ENCODE measurements at regions of chr14 and their contacts with region 1.

Region 1: DNA sequence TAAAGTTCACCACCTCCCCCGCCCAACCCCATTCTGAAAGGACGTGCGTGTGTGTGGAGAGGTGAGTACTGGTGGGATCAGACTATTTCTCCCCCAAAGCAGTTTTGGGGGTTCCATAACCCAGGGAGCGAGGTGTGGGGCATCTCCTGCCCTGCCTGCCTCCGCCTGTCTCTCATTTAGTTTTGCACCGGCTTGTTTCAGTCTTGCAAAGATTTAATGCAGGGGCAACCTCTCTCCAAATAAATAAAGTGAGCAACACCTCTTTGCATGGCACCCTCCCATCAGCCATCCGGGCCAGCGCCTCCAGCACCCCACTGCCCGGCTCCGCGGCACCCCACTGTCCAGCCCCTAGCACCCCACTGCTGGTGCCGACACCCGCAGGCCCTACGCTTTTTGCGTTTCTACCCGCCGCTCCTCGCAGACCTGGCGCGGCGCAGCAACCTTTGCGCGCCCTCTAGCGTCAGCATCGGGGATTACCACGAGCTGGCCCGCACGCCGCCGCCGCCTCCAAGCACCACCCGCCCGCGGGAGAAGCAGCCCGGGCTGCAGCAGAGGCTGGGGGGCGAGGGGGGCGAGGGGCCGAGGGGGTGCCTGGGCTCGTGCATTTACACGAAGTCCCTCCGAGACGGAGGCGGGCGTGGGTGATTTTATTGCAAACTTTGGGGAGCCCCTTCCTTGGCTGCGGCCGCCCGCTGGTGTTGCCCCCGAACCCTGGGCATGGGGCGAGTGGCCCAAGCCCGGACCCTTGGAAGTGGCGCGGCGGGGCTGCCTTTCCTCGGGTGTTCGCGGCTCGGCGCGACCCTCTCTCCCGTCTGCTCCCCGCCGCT is 55.8 kb upstream of the VRK1 start:
- DNase-seq: no peak
- ATAC-seq: peak; percentile 97
- H3K4me3 ChIP-seq: peak overlapping the region; percentile 23; the same call in 1 of the 2 replicates
- H3K27ac ChIP-seq: no peak overlapping the region
- H3K4me1 ChIP-seq: no peaks in the 10 kb centered on the region
- H3K27me3 ChIP-seq: peaks cover 7 to 11% of the 10 kb centered on the region in 2 experiments
- CTCF ChIP-seq: peak; percentile 65 to 87 (median 85)
- EP300 ChIP-seq: no peak
- POLR2A ChIP-seq: no peak
- RAD21 ChIP-seq: peak; percentile 80

Region 2: DNA sequence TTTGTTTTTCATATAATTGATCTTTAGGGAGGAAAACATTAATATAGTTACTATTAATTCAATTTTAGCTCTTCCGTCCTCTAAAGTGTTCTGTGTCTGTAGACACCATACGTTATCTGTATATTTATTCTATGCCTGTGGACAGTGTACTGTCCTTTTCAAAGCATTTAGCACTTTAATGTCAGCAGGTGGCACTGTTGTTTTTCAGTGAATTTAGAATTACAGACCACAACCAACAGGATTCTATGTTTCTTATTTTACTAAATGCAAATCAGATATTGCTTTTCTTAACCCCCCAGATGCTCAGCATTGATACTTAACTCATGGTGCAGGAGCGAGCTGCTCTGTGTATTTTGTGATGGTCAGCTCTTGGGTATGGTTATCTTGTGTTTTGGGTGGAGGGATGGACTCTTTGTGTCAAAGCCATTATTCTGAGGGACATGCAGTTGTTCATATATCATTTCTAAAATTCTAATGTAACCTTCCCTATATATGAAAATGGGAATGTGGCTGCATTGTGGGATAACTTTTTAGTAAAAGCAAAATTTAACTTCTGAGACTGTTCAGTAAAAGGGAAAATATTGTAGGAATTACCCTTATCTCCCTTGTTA is 174.0 kb before region 1 on chr14:
- CTCF ChIA-PET with region 1: interaction called, 93 read pairs
- POLR2A ChIA-PET with region 1: no interaction called
- RAD21 ChIA-PET with region 1: interaction called, 41 read pairs
- SMC1A ChIA-PET with region 1: interaction called, 31 read pairs
- in situ Hi-C with region 1: no loop called
- intact Hi-C with region 1: loop called (anchors 1 kb)
- DNase-seq: no peak
- ATAC-seq: peak; percentile 90
- H3K4me3 ChIP-seq: no peak overlapping the region
- H3K27ac ChIP-seq: no peak overlapping the region
- H3K4me1 ChIP-seq: no peaks in the 10 kb centered on the region
- H3K27me3 ChIP-seq: no peaks in the 10 kb centered on the region
- CTCF ChIP-seq: peak; percentile 38 to 50 (median 48); a peak in 5 of 6 replicates
- EP300 ChIP-seq: no peak
- POLR2A ChIP-seq: no peak
- RAD21 ChIP-seq: peak; percentile 55

Region 3: DNA sequence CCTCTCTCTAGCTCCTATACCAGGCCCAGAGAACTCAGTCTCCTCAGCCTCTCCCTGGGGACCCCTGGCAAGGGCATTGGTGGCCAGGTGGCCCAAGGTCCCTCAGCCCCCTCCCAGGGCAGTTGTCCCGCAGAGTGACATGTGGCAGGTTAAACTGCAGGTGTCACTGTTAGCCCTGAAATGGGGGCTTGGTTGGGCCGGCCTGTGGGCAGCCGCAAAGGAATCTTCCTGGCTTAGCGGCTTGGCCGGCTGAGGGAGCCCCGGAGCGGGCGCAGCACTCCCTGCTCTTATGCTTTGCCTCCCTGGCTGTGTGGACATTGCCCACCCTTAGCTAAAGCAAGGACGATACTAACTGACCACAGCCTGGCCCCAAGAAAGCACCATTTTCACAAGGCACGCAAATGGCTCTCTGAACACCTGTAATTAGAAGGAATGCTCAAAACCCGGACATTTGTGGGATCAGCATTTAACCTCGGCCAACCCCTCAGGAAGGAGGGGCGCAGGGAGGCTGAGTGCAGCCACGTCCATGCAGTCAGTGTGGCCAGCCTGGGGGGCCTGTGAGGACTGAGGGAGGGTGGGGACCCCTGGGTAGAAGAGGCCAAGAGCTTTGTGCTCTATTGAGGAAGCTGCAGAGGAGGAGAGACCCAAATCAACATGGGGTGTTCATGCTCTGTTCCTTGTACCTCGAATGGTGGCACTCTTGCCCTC is 157.0 kb before region 1 on chr14:
- CTCF ChIA-PET with region 1: interaction called, 49 read pairs
- POLR2A ChIA-PET with region 1: no interaction called
- RAD21 ChIA-PET with region 1: interaction called, 8 read pairs
- SMC1A ChIA-PET with region 1: interaction called, 10 read pairs
- in situ Hi-C with region 1: loop called (anchors 5 kb)
- intact Hi-C with region 1: loop called (anchors 1 kb)
- DNase-seq: no peak
- ATAC-seq: peak; percentile 92
- H3K4me3 ChIP-seq: no peak overlapping the region
- H3K27ac ChIP-seq: no peak overlapping the region
- H3K4me1 ChIP-seq: no peaks in the 10 kb centered on the region
- H3K27me3 ChIP-seq: peaks cover 0 to 2% of the 10 kb centered on the region in 2 experiments; a peak in 1 of 4 replicates
- CTCF ChIP-seq: peak; percentile 65 to 90 (median 74)
- EP300 ChIP-seq: no peak
- POLR2A ChIP-seq: no peak
- RAD21 ChIP-seq: peak; percentile 67

Region 4: DNA sequence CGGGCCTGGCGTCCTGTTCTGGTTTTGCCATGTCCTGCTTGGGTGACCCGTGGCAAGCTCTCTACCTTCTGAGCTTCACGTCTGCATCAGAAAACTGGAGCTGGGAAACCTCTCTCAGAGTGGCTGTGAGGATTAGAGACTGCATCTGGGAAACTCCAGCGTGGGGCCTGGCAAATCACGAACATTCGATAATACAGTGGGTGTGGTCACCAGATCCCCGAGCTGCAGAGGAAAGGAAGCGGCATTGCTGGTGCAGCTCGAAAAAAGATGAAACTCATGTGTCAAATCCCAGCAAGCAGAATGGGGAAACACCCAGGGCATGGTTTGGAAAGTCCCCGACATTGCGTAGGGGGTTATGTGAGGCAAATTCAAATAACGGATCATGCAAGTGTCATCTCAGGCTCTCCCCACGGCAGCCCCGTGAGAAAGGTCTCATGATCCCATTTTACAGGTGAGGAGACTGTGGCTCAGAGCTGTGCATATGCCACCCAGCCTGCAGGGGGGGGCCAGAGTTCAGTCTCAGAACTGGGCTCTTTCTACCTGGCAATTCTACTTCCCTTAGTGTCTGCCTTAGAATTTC is 42.3 kb before region 1 on chr14:
- CTCF ChIA-PET with region 1: interaction called, 38 read pairs
- POLR2A ChIA-PET with region 1: no interaction called
- RAD21 ChIA-PET with region 1: interaction called, 19 read pairs
- SMC1A ChIA-PET with region 1: interaction called, 8 read pairs
- in situ Hi-C with region 1: no loop called
- intact Hi-C with region 1: no loop called
- DNase-seq: peak; percentile 86
- ATAC-seq: peak; percentile 94
- H3K4me3 ChIP-seq: no peak overlapping the region
- H3K27ac ChIP-seq: peak overlapping the region; percentile 54
- H3K4me1 ChIP-seq: peaks cover 15% of the 10 kb centered on the region
- H3K27me3 ChIP-seq: no peaks in the 10 kb centered on the region
- CTCF ChIP-seq: peak; percentile 46 to 60 (median 51); a peak in 5 of 6 replicates
- EP300 ChIP-seq: peak in 1 of 2 experiments; percentile 54; a peak in 2 of 4 replicates
- POLR2A ChIP-seq: no peak
- RAD21 ChIP-seq: no peak

Region 5: DNA sequence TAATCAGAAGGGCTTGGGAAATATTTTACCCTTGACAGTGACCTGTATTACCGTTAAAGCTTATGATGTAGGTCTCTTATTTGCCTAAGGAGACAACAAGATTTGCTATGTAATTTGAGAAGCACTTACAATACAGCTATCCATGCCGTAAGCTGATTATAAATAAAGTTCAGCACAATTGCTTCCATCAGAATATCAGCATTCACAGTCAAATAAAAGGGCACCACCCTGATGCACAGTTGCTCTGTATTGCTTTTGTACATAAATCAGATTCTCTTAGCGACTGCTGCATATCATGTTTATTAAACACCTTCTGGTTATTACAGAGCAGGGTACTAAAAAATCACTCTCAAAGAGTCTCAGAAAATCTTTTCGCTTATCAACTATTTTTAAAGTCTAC is 11.5 kb before region 1 on chr14:
- CTCF ChIA-PET with region 1: interaction called, 11 read pairs
- POLR2A ChIA-PET with region 1: no interaction called
- RAD21 ChIA-PET with region 1: no interaction called
- SMC1A ChIA-PET with region 1: interaction called, 4 read pairs
- in situ Hi-C with region 1: no loop called
- intact Hi-C with region 1: no loop called
- DNase-seq: no peak
- ATAC-seq: no peak
- H3K4me3 ChIP-seq: no peak overlapping the region
- H3K27ac ChIP-seq: no peak overlapping the region
- H3K4me1 ChIP-seq: peaks cover 4% of the 10 kb centered on the region; the same call in 1 of the 2 replicates
- H3K27me3 ChIP-seq: peaks cover 2 to 4% of the 10 kb centered on the region in 2 experiments; a peak in 1 of 4 replicates
- CTCF ChIP-seq: no peak
- EP300 ChIP-seq: no peak
- POLR2A ChIP-seq: no peak
- RAD21 ChIP-seq: no peak

Region 6: DNA sequence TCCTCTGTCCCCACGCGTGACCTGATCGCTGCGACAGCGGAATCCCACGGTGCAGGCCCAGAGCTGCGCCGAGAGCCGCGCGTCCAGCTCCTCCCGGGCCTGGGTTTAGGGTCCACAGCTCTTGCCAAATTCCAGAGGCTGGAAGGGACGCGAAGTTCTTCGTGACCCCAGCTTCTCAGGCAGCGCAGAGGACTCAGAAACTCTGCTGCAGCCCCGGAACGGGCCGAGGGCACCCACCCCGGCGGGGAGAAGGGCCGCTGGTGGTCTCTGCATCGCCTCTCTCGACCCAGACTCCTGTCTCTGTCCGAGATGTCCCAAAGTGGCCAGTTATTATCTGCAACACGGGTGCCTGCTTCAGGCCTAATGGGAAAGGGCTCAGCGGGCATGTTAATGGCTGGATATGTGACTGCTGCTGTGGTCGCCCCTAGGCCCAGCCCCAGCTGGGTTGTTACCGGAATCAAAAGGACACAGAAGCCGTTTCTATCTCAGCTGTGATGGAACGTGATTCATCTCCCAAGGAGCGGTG is 292.3 kb after region 1 on chr14:
- CTCF ChIA-PET with region 1: no interaction called
- POLR2A ChIA-PET with region 1: no interaction called
- RAD21 ChIA-PET with region 1: no interaction called
- SMC1A ChIA-PET with region 1: no interaction called
- in situ Hi-C with region 1: no loop called
- intact Hi-C with region 1: no loop called
- DNase-seq: no peak
- ATAC-seq: no peak
- H3K4me3 ChIP-seq: no peak overlapping the region
- H3K27ac ChIP-seq: no peak overlapping the region
- H3K4me1 ChIP-seq: no peaks in the 10 kb centered on the region; the same call in 1 of the 2 replicates
- H3K27me3 ChIP-seq: no peaks in the 10 kb centered on the region
- CTCF ChIP-seq: no peak
- EP300 ChIP-seq: no peak
- POLR2A ChIP-seq: no peak
- RAD21 ChIP-seq: no peak

Measured in GM12878 (cell line).